ENCODE measurements at regions of chr7 and their contacts with region 1.

Region 1: DNA sequence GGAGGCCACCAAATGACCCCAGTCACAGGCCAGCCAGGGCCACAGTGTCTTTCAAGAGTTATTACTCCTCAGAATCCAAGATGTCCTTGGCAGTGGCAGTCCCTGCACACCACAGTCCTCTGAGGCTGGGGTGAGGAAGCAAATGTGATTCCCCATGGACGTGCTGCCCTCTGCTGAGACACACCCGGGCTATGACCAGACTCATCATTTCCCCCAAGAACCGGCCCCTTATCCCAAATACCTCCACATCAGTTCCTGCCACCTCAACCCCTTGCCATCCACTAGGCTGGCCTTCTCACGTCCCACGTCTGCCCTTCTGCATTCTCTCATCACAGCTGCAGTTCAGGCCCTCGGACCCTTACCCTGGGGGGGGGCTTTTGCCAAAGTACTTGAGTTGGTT is 5.0 kb downstream of the PRKAG2 start:
- H3K4me3 Mint-ChIP-seq: no peak overlapping the region
- H3K27ac Mint-ChIP-seq: peak overlapping the region; percentile 57
- H3K4me1 Mint-ChIP-seq: peaks cover 73% of the 10 kb centered on the region
- H3K27me3 Mint-ChIP-seq: no peaks in the 10 kb centered on the region

Region 2: DNA sequence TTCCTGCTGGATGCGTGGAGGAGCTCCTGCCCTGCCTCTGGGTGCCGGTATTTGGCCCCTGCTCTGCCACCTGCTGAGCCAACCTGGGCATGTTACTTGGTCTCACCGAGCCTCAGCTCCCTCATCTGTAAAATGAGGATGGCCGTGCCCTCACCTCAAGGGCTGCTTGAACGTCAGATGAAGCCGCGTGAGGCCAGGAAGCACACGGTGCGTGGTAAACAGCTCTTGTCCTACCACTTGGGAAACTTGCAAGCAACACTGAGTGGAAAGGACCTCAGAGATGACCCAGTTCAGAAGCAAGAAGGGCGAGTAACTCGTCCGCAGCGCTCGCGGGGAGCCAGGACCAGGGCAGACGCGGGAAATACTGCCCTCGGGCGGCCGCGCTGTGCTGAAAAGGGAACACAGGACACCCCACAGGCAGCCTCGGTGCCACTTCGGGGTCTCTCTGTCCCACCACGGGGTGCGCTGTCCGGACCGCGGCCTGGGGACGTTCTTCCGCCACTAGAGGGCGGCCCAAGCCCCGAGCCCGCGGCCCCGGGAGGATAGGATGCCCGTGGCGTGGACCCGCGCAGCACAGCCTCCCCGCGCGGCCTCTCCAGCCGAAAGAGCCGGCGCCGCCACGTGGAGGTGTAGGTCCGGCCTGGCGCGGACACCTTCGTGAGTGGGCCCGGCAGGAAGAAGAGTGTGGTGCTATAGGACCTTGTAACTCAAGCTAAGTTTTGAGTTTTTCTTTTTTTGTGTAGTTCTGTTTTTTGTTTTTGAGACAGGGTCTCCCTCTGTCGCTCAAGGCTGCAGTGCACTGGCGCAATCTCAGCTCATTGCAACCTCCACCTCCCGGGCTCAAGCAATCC is 89.1 kb before region 1 on chr7:
- intact Hi-C with region 1: loop called (anchors 2 kb)
- H3K4me3 Mint-ChIP-seq: peak overlapping the region; percentile 45
- H3K27ac Mint-ChIP-seq: no peak overlapping the region
- H3K4me1 Mint-ChIP-seq: peaks cover 63% of the 10 kb centered on the region
- H3K27me3 Mint-ChIP-seq: no peaks in the 10 kb centered on the region

Region 3: GRCh38 chr7:151825721-151826120 is 46.2 kb before region 1 on chr7:
- intact Hi-C with region 1: loop called (anchors 5 kb)
- H3K4me3 Mint-ChIP-seq: peak overlapping the region; percentile 67
- H3K27ac Mint-ChIP-seq: peak overlapping the region; percentile 89
- H3K4me1 Mint-ChIP-seq: peaks cover 82% of the 10 kb centered on the region
- H3K27me3 Mint-ChIP-seq: no peaks in the 10 kb centered on the region